Transverse colon (tissue), 4 donors: ENCODE measurements at regions of chr9 and their contacts with region 1.

Region 1: GRCh38 chr9:37732086-37732741 is 21.4 kb upstream of the TRMT10B start:
- DNase-seq: no peak
- H3K4me3 ChIP-seq: no peak overlapping the region
- H3K27ac ChIP-seq: no peak overlapping the region
- H3K4me1 ChIP-seq: no peaks in the 10 kb centered on the region
- H3K27me3 ChIP-seq: no peaks in the 10 kb centered on the region
- CTCF ChIP-seq: no peak
- EP300 ChIP-seq: no peak
- POLR2A ChIP-seq: no peak

Region 2: DNA sequence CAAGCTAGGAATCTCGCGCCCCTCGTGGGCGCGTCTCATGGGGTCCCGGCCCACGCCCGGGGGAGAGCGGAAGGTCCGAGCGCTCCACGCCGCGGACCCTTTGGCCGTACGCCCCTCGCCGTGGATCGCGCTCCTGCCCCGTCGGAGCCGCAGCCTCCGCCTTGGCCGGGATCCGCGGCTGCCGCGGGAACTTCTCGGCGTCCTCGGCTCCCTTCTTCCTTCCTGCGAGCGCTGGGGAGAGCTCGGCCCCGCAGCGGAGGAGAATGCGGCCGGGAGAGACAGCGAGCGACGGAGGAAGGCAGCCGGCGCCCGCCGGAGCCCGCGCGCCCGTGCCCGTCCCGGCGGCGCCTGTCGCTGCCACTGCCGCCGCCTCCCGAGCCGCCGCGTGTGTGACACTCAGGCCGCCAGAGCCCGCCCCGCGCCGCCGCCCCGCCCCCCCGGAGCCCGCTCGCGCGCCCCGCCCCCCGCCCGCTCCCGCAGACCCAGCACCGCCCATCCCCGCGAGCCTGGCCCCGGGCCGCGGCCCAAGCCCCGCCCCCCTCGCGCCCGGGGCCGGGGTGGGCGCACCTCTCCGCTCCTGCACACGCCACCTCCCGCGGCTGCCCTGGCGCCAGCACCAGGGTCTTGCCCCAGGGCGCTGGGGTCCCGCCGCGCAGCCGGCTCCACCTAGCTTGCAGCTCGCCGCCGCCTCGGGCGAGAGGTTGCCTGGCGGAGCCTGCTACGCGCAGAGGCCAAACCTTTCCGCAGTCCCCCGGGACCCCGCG is 336.8 kb after region 1 on chr9 and contains the start of gene SHB:
- in situ Hi-C with region 1: no loop called
- intact Hi-C with region 1: no loop called
- DNase-seq: peak; percentile 88
- H3K4me3 ChIP-seq: peak within 1 kb of the TSS; percentile 86 to 99 (median 94)
- H3K27ac ChIP-seq: peak within 1 kb of the TSS; percentile 93 to 98 (median 98)
- H3K4me1 ChIP-seq: peaks cover 11 to 58% (median 42%) of the 10 kb centered on the region in 4 donors
- H3K27me3 ChIP-seq: no peaks in the 10 kb centered on the region
- CTCF ChIP-seq: peak in 3 of 5 experiments; percentile 36 to 71 (median 55)
- EP300 ChIP-seq: no peak
- POLR2A ChIP-seq: peak; percentile 60
- total RNA-seq, gene SHB: 11.9 to 33.7 (median 22.2) TPM

Region 3: DNA sequence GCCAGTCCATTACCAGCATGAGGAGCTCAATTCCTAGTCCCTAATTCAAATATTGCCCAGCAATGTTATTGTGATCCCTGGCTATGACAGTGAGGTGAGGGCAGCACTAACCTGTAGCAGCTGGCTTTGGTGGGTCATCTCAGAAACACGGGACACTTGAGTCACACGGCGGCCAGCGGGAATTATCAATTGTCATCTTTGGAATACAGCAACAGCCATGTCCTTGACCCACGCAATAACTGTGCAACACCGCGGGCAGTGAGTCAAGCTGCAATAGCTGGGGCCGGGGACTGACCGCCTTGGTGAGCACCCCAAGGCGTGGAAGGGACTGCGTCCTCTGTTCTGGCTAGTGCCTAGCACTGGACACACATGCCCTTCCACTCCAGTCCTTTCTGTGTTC is 597.8 kb after region 1 on chr9:
- in situ Hi-C with region 1: no loop called
- intact Hi-C with region 1: loop called (anchors 5 kb)
- DNase-seq: no peak
- H3K4me3 ChIP-seq: no peak overlapping the region
- H3K27ac ChIP-seq: no peak overlapping the region
- H3K4me1 ChIP-seq: no peaks in the 10 kb centered on the region
- H3K27me3 ChIP-seq: no peaks in the 10 kb centered on the region
- CTCF ChIP-seq: no peak
- EP300 ChIP-seq: no peak
- POLR2A ChIP-seq: no peak